ENCODE measurements at regions of chr4 and their contacts with region 1.

Region 1: GRCh38 chr4:173505924-173506518 is 24.0 kb downstream of the HAND2 start:
- DNase-seq: no peak
- H3K4me3 ChIP-seq: peak overlapping the region in 3 of 8 donors; percentile 11 to 54 (median 14)
- H3K27ac ChIP-seq: no peak overlapping the region
- H3K4me1 ChIP-seq: peaks cover 6 to 58% (median 36%) of the 10 kb centered on the region in 6 donors
- H3K27me3 ChIP-seq: peaks cover 11 to 100% (median 100%) of the 10 kb centered on the region in 7 donors
- CTCF ChIP-seq: peak in 9 of 11 experiments; percentile 29 to 76 (median 60)
- POLR2A ChIP-seq: no peak

Region 2: GRCh38 chr4:173461170-173461569 is 44.9 kb before region 1 on chr4:
- intact Hi-C with region 1: no loop called
- DNase-seq: no peak
- H3K4me3 ChIP-seq: no peak overlapping the region
- H3K27ac ChIP-seq: no peak overlapping the region
- H3K4me1 ChIP-seq: no peaks in the 10 kb centered on the region
- H3K27me3 ChIP-seq: no peaks in the 10 kb centered on the region
- CTCF ChIP-seq: no peak
- POLR2A ChIP-seq: no peak

Region 3: GRCh38 chr4:173609158-173609557 is 103.1 kb after region 1 on chr4:
- intact Hi-C with region 1: no loop called
- DNase-seq: no peak
- H3K4me3 ChIP-seq: no peak overlapping the region
- H3K27ac ChIP-seq: no peak overlapping the region
- H3K4me1 ChIP-seq: no peaks in the 10 kb centered on the region
- H3K27me3 ChIP-seq: peaks cover 0 to 8% (median 0%) of the 10 kb centered on the region in 7 donors
- CTCF ChIP-seq: no peak
- POLR2A ChIP-seq: no peak

Region 4: GRCh38 chr4:174120446-174121295 is 614.6 kb after region 1 on chr4:
- intact Hi-C with region 1: loop called (anchors 10 kb)
- DNase-seq: no peak
- H3K4me3 ChIP-seq: peak overlapping the region in 2 of 8 donors; percentile 19 to 32
- H3K27ac ChIP-seq: no peak overlapping the region
- H3K4me1 ChIP-seq: peaks cover 0 to 10% (median 0%) of the 10 kb centered on the region in 6 donors
- H3K27me3 ChIP-seq: peaks cover 0 to 76% (median 3%) of the 10 kb centered on the region in 7 donors
- CTCF ChIP-seq: peak in 7 of 11 experiments; percentile 36 to 62 (median 48)
- POLR2A ChIP-seq: no peak